HCT116 (cell line): ENCODE measurements at regions of chr7 and their contacts with region 1.

Region 1: DNA sequence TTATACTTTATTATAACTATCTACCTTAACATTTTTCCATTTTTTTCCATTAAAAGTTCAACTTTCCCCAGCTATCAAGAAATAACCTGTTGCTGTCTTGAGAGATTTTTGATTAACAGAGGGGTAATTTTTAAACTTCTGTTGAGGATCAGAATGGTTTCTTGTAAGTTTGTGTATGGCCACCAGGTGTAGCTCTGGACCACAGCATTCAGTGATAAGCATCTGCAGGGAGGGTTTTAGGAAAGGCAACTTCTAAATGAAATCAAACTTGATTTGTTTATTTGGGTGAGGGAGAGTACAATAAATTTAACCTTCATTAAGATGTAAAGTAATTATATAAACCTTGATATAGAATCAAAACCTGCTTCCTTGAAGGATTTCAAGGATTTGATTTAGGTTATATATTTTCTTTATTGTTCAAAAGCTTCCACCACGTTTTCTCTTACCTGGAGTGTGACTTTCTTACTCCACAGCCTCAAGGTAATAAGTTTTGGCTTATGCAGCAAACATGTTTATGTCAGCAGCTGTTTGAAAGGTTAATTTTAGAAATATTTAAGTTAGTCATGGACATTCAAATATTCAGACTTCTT is 153.3 kb downstream of the STK31 start:
- DNase-seq: peak; percentile 45
- ATAC-seq: peak; percentile 86
- H3K4me3 ChIP-seq: no peak overlapping the region
- H3K27ac ChIP-seq: no peak overlapping the region
- H3K4me1 ChIP-seq: no peaks in the 10 kb centered on the region
- H3K27me3 ChIP-seq: no peaks in the 10 kb centered on the region
- CTCF ChIP-seq: peak; percentile 65 to 82 (median 77); a peak in 5 of 6 replicates
- POLR2A ChIP-seq: no peak
- RAD21 ChIP-seq: peak; percentile 90

Region 2: GRCh38 chr7:23431702-23432199 is 431.6 kb before region 1 on chr7:
- CTCF ChIA-PET with region 1: no interaction called
- POLR2A ChIA-PET with region 1: no interaction called
- RAD21 ChIA-PET with region 1: no interaction called
- intact Hi-C with region 1: no loop called
- DNase-seq: no peak
- ATAC-seq: no peak
- H3K4me3 ChIP-seq: no peak overlapping the region
- H3K27ac ChIP-seq: no peak overlapping the region
- H3K4me1 ChIP-seq: peaks cover 15 to 27% of the 10 kb centered on the region in 2 experiments
- H3K27me3 ChIP-seq: no peaks in the 10 kb centered on the region
- CTCF ChIP-seq: no peak
- POLR2A ChIP-seq: no peak
- RAD21 ChIP-seq: no peak

Region 3: GRCh38 chr7:23570592-23571200 is 292.6 kb before region 1 on chr7:
- CTCF ChIA-PET with region 1: no interaction called
- POLR2A ChIA-PET with region 1: no interaction called
- RAD21 ChIA-PET with region 1: no interaction called
- intact Hi-C with region 1: loop called (anchors 5 kb)
- DNase-seq: peak; percentile 77
- ATAC-seq: peak; percentile 99
- H3K4me3 ChIP-seq: no peak overlapping the region
- H3K27ac ChIP-seq: no peak overlapping the region
- H3K4me1 ChIP-seq: peaks cover 0 to 4% of the 10 kb centered on the region in 2 experiments; a peak in 1 of 4 replicates
- H3K27me3 ChIP-seq: no peaks in the 10 kb centered on the region
- CTCF ChIP-seq: peak; percentile 86 to 91 (median 90)
- POLR2A ChIP-seq: no peak
- RAD21 ChIP-seq: peak; percentile 97

Region 4: DNA sequence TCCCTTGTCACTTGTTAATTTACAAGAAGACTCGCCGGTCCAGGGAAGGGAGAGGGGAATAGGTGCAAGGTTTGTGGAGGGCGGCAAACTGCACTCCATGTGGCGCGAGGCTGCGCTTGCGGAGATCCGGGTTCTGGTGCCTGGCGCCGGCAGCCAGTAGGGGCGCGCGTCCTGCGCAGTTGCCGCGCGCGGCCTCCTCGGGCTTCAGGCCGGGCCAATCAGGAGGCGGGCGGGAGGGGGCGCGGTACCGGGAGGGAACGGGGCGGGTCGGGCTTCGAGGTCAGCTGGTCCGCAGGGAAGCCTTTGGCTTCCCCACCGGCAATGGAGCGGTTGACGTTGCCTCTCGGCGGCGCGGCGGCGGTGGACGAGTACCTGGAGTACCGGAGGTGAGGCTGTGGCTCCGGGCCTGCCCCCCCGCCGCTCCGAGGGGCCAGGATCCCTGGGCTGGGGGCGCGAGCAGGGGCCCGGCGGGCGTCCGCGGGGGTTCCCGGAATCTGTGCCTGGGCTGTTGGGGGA is 183.3 kb before region 1 on chr7 and contains the start of gene FAM221A:
- CTCF ChIA-PET with region 1: no interaction called
- POLR2A ChIA-PET with region 1: no interaction called
- RAD21 ChIA-PET with region 1: no interaction called
- intact Hi-C with region 1: no loop called
- DNase-seq: no peak
- ATAC-seq: peak; percentile 96
- H3K4me3 ChIP-seq: peak within 1 kb of the TSS; percentile 36 to 41
- H3K27ac ChIP-seq: no peak within 1 kb of the TSS
- H3K4me1 ChIP-seq: peaks cover 0 to 9% of the 10 kb centered on the region in 2 experiments; a peak in 1 of 4 replicates
- H3K27me3 ChIP-seq: no peaks in the 10 kb centered on the region
- CTCF ChIP-seq: peak in 2 of 3 experiments; percentile 28 to 54; a peak in 3 of 6 replicates
- POLR2A ChIP-seq: no peak
- RAD21 ChIP-seq: no peak
- total RNA-seq, gene FAM221A: 2.2 TPM

Region 5: DNA sequence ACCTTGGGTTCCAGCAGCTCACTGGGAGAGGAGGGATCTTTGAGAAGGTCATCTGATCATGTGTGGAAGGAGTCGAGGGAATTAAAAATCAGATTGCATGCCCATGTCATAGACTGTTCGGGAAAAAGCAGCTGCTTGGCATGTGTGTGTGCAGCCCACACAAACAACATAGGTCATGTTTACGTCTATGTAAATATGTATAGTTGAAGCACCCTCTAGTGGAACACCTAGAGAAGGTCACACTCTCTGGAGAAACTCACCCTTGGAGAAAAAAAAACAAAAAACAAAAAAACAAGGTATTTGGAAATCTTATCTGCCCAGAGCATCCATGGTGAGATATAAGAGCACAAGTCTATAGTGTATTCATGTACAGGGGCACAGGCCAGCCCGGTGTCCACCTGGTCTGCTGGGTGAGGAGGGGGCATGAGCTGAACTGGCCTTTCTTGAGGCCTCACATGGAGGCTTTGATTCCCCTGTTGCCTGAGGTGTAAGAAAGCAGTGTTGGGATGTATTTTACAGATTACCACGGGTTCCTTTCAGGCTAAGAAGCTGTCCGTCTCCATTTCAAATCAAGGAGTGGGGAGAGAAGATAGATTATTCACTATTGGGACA is 518.7 kb after region 1 on chr7:
- CTCF ChIA-PET with region 1: interaction called, 11 read pairs
- POLR2A ChIA-PET with region 1: no interaction called
- RAD21 ChIA-PET with region 1: no interaction called
- intact Hi-C with region 1: loop called (anchors 1 kb)
- DNase-seq: peak; percentile 10
- ATAC-seq: peak; percentile 82
- H3K4me3 ChIP-seq: no peak overlapping the region
- H3K27ac ChIP-seq: no peak overlapping the region
- H3K4me1 ChIP-seq: peaks cover 6 to 10% of the 10 kb centered on the region in 2 experiments; a peak in 3 of 4 replicates
- H3K27me3 ChIP-seq: no peaks in the 10 kb centered on the region
- CTCF ChIP-seq: peak; percentile 49 to 69 (median 67); a peak in 5 of 6 replicates
- POLR2A ChIP-seq: no peak
- RAD21 ChIP-seq: peak; percentile 72

Region 6: GRCh38 chr7:24665564-24666294 is 802.4 kb after region 1 on chr7:
- CTCF ChIA-PET with region 1: no interaction called
- POLR2A ChIA-PET with region 1: no interaction called
- RAD21 ChIA-PET with region 1: no interaction called
- intact Hi-C with region 1: loop called (anchors 5 kb)
- DNase-seq: peak; percentile 27
- ATAC-seq: peak; percentile 78
- H3K4me3 ChIP-seq: no peak overlapping the region
- H3K27ac ChIP-seq: no peak overlapping the region
- H3K4me1 ChIP-seq: 0 out of 4 replicates have a peak, but pooled peaks cover 0 to 7% of the 10 kb centered on the region in 2 experiments
- H3K27me3 ChIP-seq: no peaks in the 10 kb centered on the region
- CTCF ChIP-seq: peak; percentile 57 to 78 (median 58); a peak in 5 of 6 replicates
- POLR2A ChIP-seq: no peak
- RAD21 ChIP-seq: peak; percentile 76

Region 7: DNA sequence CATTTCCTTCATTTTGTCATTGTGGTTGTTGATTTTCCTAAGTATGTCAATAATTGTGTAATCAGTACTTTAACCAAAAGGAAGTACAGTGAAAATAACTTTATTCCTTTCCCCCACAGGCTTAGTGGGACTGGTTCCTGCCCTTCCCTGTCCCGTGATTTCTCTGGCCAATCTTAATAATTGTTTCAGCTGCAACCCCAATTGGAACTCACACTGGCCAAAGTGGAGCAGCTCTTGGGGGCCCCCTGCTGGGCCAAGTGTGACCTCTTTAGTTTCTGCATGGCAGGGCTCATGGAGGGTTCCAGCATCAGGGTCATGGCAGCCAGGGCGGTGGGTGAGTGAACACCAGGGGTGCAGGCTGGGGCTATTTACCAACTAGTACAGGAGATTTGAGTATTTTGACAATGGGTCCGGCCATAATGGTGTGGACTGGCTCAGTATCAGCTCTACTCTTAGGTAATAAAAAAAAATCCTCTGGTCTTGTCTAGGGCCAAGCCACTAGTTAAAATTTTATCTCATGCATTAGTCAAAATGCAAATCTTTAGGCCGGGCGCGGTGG is 1230.0 kb after region 1 on chr7:
- CTCF ChIA-PET with region 1: interaction called, 6 read pairs
- POLR2A ChIA-PET with region 1: no interaction called
- RAD21 ChIA-PET with region 1: no interaction called
- intact Hi-C with region 1: loop called (anchors 10 kb)
- DNase-seq: peak; percentile 70
- ATAC-seq: peak; percentile 88
- H3K4me3 ChIP-seq: no peak overlapping the region
- H3K27ac ChIP-seq: no peak overlapping the region
- H3K4me1 ChIP-seq: peaks cover 2 to 30% of the 10 kb centered on the region in 2 experiments; a peak in 3 of 4 replicates
- H3K27me3 ChIP-seq: no peaks in the 10 kb centered on the region
- CTCF ChIP-seq: peak; percentile 84 to 92 (median 91)
- POLR2A ChIP-seq: no peak
- RAD21 ChIP-seq: peak; percentile 84